CD8-positive, alpha-beta T cell (primary cell): ENCODE measurements at regions of chr4 and their contacts with region 1.

Region 1: GRCh38 chr4:4260253-4260652 is 12.2 kb upstream of the TMEM128 start:
- DNase-seq: peak in 3 of 9 experiments; percentile 16 to 86 (median 81)
- ATAC-seq: peak; percentile 100
- H3K4me3 ChIP-seq: no peak overlapping the region
- H3K4me3 Mint-ChIP-seq: no peak overlapping the region
- H3K27ac ChIP-seq: no peak overlapping the region
- H3K27ac Mint-ChIP-seq: peak overlapping the region; percentile 56
- H3K4me1 ChIP-seq: no peaks in the 10 kb centered on the region
- H3K4me1 Mint-ChIP-seq: peaks cover 13% of the 10 kb centered on the region
- H3K27me3 ChIP-seq: no peaks in the 10 kb centered on the region
- H3K27me3 Mint-ChIP-seq: no peaks in the 10 kb centered on the region
- CTCF ChIP-seq: peak; percentile 86

Region 2: DNA sequence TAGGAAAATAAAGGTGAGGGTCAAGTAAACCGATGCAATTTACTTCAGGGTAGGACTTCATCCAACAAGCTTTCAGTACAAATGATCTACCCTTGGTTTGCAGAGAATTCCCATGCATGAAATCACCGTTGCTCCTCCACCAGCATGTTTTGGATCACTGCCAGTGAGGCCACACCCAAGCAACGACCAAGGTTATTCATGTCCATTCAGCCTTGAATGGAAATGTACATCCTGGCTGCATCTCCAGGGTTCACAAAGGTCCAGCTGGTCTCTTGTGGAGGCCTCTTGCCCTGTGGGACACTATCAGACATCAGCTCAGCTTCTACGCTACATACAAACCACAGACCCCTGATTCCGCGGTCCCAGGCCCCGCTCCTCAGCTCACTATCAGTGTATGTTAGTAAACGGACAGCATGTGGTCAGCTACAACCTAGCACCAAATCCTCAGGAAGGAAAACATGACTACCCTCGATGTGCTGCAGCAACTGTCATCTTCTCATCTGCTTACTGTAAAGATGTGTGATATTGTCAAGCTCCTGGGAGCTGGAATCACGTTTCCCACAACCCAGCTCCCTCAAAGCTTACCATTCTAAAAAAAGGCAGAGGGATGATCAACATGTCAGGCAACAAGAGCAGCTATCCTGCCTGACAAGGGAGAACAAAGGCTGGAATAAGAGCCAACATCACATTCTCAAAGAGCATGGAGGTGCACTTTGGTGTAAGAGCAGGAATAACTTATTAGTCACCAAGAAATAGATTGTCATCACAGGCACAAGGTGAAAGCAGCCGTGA is 24.8 kb after region 1 on chr4:
- CTCF ChIA-PET with region 1: interaction called, 23 read pairs
- POLR2A ChIA-PET with region 1: interaction called, 4 read pairs
- intact Hi-C with region 1: loop called in 1 of 2 experiments (anchors 2 kb)
- DNase-seq: no peak
- ATAC-seq: no peak
- H3K4me3 ChIP-seq: no peak overlapping the region
- H3K4me3 Mint-ChIP-seq: no peak overlapping the region
- H3K27ac ChIP-seq: no peak overlapping the region
- H3K27ac Mint-ChIP-seq: no peak overlapping the region
- H3K4me1 ChIP-seq: peaks cover 19% of the 10 kb centered on the region
- H3K4me1 Mint-ChIP-seq: peaks cover 55% of the 10 kb centered on the region
- H3K27me3 ChIP-seq: no peaks in the 10 kb centered on the region
- H3K27me3 Mint-ChIP-seq: no peaks in the 10 kb centered on the region
- CTCF ChIP-seq: no peak

Region 3: GRCh38 chr4:4323705-4324534 is 63.7 kb after region 1 on chr4:
- CTCF ChIA-PET with region 1: interaction called, 10 read pairs
- POLR2A ChIA-PET with region 1: no interaction called
- intact Hi-C with region 1: no loop called
- DNase-seq: no peak
- ATAC-seq: no peak
- H3K4me3 ChIP-seq: no peak overlapping the region
- H3K4me3 Mint-ChIP-seq: no peak overlapping the region
- H3K27ac ChIP-seq: no peak overlapping the region
- H3K27ac Mint-ChIP-seq: peak overlapping the region; percentile 10
- H3K4me1 ChIP-seq: no peaks in the 10 kb centered on the region
- H3K4me1 Mint-ChIP-seq: no peaks in the 10 kb centered on the region
- H3K27me3 ChIP-seq: no peaks in the 10 kb centered on the region
- H3K27me3 Mint-ChIP-seq: no peaks in the 10 kb centered on the region
- CTCF ChIP-seq: no peak

Region 4: DNA sequence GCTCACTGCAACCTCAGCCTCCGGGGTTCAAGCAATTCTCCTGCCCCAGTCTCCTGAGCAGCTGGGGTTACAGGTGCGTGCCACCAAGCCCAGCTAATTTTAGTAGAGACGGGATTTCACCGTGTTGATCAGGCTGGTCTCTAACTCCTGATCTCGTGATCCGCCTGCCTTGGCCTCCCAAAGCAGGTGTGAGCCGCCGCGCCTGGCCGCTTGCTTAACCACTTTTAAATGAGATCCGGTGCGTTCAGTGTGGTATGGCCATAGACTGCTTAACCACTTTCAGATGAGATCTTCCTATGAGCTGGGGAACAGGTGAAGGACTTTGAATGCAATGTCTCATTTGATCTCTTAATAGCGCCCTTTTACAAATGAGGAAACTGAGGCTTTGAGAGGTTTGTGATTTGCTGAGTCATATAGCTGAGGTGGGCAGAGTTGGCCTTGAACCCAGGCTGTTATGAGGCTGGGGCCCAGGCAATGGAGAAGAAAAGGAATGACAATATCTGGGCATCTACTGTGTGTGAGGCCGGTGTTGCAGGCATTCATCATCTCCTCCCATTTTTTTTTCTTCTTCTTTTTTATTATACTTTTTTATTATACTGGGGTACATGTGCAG is 84.8 kb after region 1 on chr4:
- CTCF ChIA-PET with region 1: interaction called, 148 read pairs
- POLR2A ChIA-PET with region 1: interaction called, 6 read pairs
- intact Hi-C with region 1: no loop called
- DNase-seq: peak in 1 of 9 experiments; percentile 11
- ATAC-seq: no peak
- H3K4me3 ChIP-seq: no peak overlapping the region
- H3K4me3 Mint-ChIP-seq: no peak overlapping the region
- H3K27ac ChIP-seq: no peak overlapping the region
- H3K27ac Mint-ChIP-seq: no peak overlapping the region
- H3K4me1 ChIP-seq: peaks cover 38% of the 10 kb centered on the region
- H3K4me1 Mint-ChIP-seq: peaks cover 61% of the 10 kb centered on the region
- H3K27me3 ChIP-seq: no peaks in the 10 kb centered on the region
- H3K27me3 Mint-ChIP-seq: no peaks in the 10 kb centered on the region
- CTCF ChIP-seq: no peak

Region 5: DNA sequence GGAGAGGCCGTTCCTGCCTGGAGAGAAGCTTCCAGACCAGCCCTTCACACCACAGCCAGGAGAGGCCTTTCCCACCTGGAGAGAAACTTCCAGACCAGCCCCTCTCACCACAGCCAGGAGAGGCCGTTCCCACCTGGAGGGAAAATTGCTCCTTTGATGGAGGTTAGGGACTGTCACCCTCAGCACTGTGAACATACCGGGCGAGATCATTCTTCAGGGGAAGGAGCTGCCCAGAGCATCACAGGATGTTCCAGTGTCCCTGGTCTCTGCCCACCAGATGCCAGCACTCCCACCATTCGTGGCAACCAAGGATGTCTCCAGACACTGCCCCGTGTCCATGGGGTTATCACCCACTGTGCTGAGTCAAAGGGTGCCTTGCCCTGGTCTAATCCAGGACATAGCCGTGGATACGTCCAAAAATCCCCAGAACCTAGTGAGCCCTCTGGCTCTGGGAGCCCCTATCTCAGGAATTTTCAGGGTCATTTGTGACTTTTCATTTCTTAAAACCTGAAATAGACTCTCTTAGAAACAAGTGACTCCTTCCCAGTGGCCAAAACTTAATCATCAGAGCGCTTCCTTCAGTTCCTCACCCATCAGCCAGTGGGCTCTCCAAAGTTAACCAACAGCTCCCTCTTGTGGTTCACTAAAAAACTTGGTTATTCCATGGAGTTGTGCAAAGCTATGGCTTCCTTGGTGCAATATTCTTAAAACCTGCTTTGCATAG is 1552.4 kb after region 1 on chr4:
- CTCF ChIA-PET with region 1: no interaction called
- POLR2A ChIA-PET with region 1: no interaction called
- intact Hi-C with region 1: loop called in 1 of 2 experiments (anchors 5 kb)
- DNase-seq: peak in 2 of 9 experiments; percentile 35 to 55
- ATAC-seq: no peak
- H3K4me3 ChIP-seq: no peak overlapping the region
- H3K4me3 Mint-ChIP-seq: no peak overlapping the region
- H3K27ac ChIP-seq: no peak overlapping the region
- H3K27ac Mint-ChIP-seq: no peak overlapping the region
- H3K4me1 ChIP-seq: no peaks in the 10 kb centered on the region
- H3K4me1 Mint-ChIP-seq: no peaks in the 10 kb centered on the region
- H3K27me3 ChIP-seq: no peaks in the 10 kb centered on the region
- H3K27me3 Mint-ChIP-seq: no peaks in the 10 kb centered on the region
- CTCF ChIP-seq: no peak